ENCODE measurements at regions of chr6 and their contacts with region 1.

Region 1: DNA sequence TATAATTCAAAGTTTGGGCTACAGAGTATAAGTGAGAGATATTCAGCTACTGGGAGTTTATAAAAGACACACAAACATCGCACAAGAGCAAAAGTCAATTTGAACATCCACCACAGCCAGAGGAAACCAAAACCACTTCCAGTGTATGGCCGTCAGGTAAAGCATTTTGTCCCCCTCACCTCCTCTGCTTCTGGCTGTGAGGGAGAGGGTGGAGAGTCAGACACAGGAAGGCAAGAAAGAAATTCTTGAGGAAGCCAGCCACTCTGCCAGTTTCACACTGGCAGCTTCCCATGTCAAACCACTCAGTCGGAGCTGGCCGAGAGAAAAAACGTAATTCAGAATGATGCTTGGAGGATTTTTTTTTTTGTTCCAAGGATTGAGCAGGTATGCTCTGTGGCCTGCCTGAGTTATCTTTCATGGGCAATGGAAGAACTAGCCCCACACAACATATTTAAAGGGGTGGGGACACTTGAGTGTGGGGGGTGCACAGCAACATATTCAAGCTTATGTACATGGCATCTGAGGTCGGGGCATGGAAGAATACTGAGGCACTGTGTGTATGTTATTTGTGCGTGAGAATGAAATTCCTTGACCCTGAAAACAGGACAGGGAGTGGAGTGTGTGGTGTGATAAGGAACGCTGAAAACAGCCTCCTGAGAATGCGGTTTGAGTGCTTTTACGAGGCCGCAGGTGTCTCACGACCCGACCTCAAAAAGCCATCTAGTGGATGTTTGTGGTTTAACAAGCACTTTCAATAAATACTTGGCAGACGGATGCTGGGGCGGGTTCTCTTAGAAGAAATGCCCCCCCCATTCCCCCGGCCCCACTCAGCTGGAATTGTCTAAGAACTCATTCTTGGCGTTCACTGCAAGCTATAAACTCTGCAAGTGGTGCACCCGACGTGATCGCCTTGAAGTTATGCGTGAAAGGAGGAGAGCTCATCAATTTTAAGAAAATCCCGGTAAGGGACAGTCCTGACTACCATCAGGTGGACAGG is 27.5 kb upstream of the ZBTB22 start:
- DNase-seq: peak; percentile 77
- H3K4me3 Mint-ChIP-seq: peak overlapping the region; percentile 64
- H3K27ac Mint-ChIP-seq: peak overlapping the region; percentile 74
- H3K4me1 Mint-ChIP-seq: peaks cover 20% of the 10 kb centered on the region
- H3K27me3 Mint-ChIP-seq: no peaks in the 10 kb centered on the region

Region 2: GRCh38 chr6:33112148-33112547 is 232.9 kb before region 1 on chr6:
- CTCF ChIA-PET with region 1: no interaction called
- intact Hi-C with region 1: loop called (anchors 10 kb)
- DNase-seq: peak; percentile 28
- H3K4me3 Mint-ChIP-seq: no peak overlapping the region
- H3K27ac Mint-ChIP-seq: no peak overlapping the region
- H3K4me1 Mint-ChIP-seq: peaks cover 2% of the 10 kb centered on the region
- H3K27me3 Mint-ChIP-seq: peaks cover 49% of the 10 kb centered on the region

Region 3: GRCh38 chr6:33276864-33277662 is 67.9 kb before region 1 on chr6 and contains the start of gene B3GALT4:
- CTCF ChIA-PET with region 1: interaction called, 21 read pairs
- intact Hi-C with region 1: no loop called
- DNase-seq: peak; percentile 73
- H3K4me3 Mint-ChIP-seq: peak within 1 kb of the TSS; percentile 99
- H3K27ac Mint-ChIP-seq: peak within 1 kb of the TSS; percentile 94
- H3K4me1 Mint-ChIP-seq: peaks cover 45% of the 10 kb centered on the region
- H3K27me3 Mint-ChIP-seq: no peaks in the 10 kb centered on the region
- total RNA-seq, gene B3GALT4: 4.4 TPM

Region 4: GRCh38 chr6:33317669-33318425 is 27.2 kb before region 1 on chr6 and contains the start of gene ZBTB22:
- CTCF ChIA-PET with region 1: interaction called, 29 read pairs
- intact Hi-C with region 1: loop called (anchors 1 kb)
- DNase-seq: peak; percentile 97
- H3K4me3 Mint-ChIP-seq: peak within 1 kb of the TSS; percentile 94
- H3K27ac Mint-ChIP-seq: peak within 1 kb of the TSS; percentile 95
- H3K4me1 Mint-ChIP-seq: peaks cover 72% of the 10 kb centered on the region
- H3K27me3 Mint-ChIP-seq: no peaks in the 10 kb centered on the region
- total RNA-seq, gene ZBTB22: 8.8 to 9.0 TPM

Region 5: GRCh38 chr6:33323623-33323948 is 21.4 kb before region 1 on chr6:
- CTCF ChIA-PET with region 1: interaction called, 16 read pairs
- intact Hi-C with region 1: loop called (anchors 1 kb)
- DNase-seq: no peak
- H3K4me3 Mint-ChIP-seq: peak overlapping the region; percentile 95
- H3K27ac Mint-ChIP-seq: peak overlapping the region; percentile 98
- H3K4me1 Mint-ChIP-seq: peaks cover 43% of the 10 kb centered on the region
- H3K27me3 Mint-ChIP-seq: no peaks in the 10 kb centered on the region

Measured in activated naive CD4-positive, alpha-beta T cell treated with anti-CD3 and anti-CD28 coated beads for 36 hours (primary cell).